Common myeloid progenitor, CD34-positive (primary cell): ENCODE measurements at regions of chr1 and their contacts with region 1.

Region 1: GRCh38 chr1:201559679-201560162 is 20.8 kb downstream of the NAV1 start:
- DNase-seq: peak; percentile 84 to 91 (median 89)
- H3K4me3 ChIP-seq: no peak overlapping the region
- H3K27ac ChIP-seq: no peak overlapping the region
- H3K4me1 ChIP-seq: peaks cover 3 to 45% (median 34%) of the 10 kb centered on the region in 4 experiments
- H3K27me3 ChIP-seq: no peaks in the 10 kb centered on the region

Region 2: DNA sequence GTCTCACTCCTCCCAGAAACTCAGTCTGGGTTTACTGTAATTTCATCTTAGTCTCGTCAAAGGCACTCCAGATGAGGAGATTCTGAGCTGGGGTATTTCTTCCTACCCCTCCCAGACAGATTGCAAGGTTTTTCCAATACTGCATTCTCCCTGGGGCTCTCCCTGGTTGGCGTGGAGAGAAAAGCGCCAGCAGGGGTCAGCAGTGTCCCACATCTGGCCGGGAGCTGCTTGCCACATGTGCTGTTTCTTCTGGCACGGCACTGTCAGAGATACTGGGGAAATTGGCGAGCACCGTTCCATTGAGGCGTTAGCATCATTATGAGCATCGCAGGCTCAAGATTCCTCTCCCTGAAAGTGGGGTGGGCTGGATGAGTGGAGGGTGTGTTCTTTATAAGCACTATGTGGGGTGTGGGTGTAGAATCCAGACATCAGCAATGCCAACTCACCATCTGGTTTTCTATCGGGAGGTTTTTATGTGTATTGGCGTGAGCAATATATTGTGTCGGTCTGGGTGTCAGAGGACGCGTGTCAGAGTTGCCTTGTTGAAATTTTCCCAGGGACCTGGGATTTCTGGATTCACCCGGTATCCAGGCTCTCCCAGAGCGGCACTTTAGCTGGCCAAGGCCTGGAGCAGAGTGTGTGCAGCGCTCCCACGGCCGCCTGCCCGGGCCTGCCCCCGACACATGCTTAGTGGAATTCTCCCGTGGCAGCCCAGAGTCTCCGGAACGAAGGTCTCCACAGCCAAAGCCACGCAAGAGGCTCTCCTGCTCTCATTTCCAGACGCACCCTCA is 28.8 kb before region 1 on chr1:
- CTCF ChIA-PET with region 1: interaction called, 102 read pairs
- POLR2A ChIA-PET with region 1: no interaction called
- DNase-seq: peak; percentile 77 to 83 (median 79)
- H3K4me3 ChIP-seq: peak overlapping the region in 1 of 7 experiments; percentile 14
- H3K27ac ChIP-seq: no peak overlapping the region
- H3K4me1 ChIP-seq: peaks cover 0 to 38% (median 29%) of the 10 kb centered on the region in 4 experiments
- H3K27me3 ChIP-seq: no peaks in the 10 kb centered on the region

Region 3: DNA sequence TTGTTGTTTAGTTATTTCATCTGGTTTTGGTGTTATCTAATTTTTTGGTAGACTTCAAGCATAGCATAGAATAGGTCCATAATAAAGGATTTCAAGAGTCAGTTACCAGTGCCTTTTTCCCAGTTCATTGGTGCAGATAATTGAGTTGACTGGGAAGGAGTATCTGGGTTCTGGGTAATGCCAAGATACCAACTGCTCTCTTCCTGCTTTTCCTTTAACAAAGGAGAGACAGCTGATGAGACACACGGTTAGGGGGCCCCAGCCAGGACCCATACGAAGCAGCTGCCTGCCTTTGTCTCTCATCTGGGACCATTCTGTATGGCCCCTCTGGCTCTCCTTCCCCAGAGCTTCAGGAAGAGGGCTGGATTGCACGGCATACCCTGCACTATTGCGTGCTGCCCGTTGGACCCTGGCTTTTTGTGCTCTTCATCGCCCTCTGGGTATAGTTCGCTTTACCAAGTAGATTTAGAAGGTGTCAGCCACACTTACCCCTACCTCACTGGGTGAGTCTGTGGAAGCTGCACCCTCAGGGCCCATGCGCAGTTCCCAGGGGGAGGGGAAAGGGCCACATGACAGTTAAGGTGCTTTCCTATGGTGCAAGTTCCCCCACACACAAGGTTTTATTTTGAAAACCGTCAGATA is 13.7 kb before region 1 on chr1:
- CTCF ChIA-PET with region 1: interaction called, 15 read pairs
- POLR2A ChIA-PET with region 1: no interaction called
- DNase-seq: peak; percentile 58 to 80 (median 76)
- H3K4me3 ChIP-seq: peak overlapping the region in 2 of 7 experiments; percentile 52 to 69
- H3K27ac ChIP-seq: no peak overlapping the region
- H3K4me1 ChIP-seq: peaks cover 0 to 15% (median 8%) of the 10 kb centered on the region in 4 experiments
- H3K27me3 ChIP-seq: no peaks in the 10 kb centered on the region

Region 4: GRCh38 chr1:201573030-201573429 is 13.3 kb after region 1 on chr1:
- CTCF ChIA-PET with region 1: interaction called, 17 read pairs
- POLR2A ChIA-PET with region 1: no interaction called
- DNase-seq: no peak
- H3K4me3 ChIP-seq: no peak overlapping the region
- H3K27ac ChIP-seq: no peak overlapping the region
- H3K4me1 ChIP-seq: peaks cover 0 to 40% (median 20%) of the 10 kb centered on the region in 4 experiments
- H3K27me3 ChIP-seq: no peaks in the 10 kb centered on the region

Region 5: GRCh38 chr1:201591348-201591747 is 31.6 kb after region 1 on chr1:
- CTCF ChIA-PET with region 1: no interaction called
- POLR2A ChIA-PET with region 1: no interaction called
- DNase-seq: no peak
- H3K4me3 ChIP-seq: no peak overlapping the region
- H3K27ac ChIP-seq: no peak overlapping the region
- H3K4me1 ChIP-seq: no peaks in the 10 kb centered on the region
- H3K27me3 ChIP-seq: no peaks in the 10 kb centered on the region